Esophagus muscularis mucosa (tissue), 4 donors: ENCODE measurements at regions of chr17 and their contacts with region 1.

Region 1: GRCh38 chr17:30336369-30337171 is 2.7 kb upstream of the TMIGD1 start:
- DNase-seq: peak; percentile 86
- H3K4me3 ChIP-seq: no peak overlapping the region
- H3K27ac ChIP-seq: no peak overlapping the region
- H3K4me1 ChIP-seq: peaks cover 5 to 21% (median 19%) of the 10 kb centered on the region in 4 donors
- H3K27me3 ChIP-seq: no peaks in the 10 kb centered on the region
- CTCF ChIP-seq: peak; percentile 43 to 52 (median 49)
- EP300 ChIP-seq: no peak
- POLR2A ChIP-seq: no peak

Region 2: GRCh38 chr17:30124273-30124796 is 212.2 kb before region 1 on chr17:
- intact Hi-C with region 1: loop called (anchors 10 kb)
- DNase-seq: no peak
- H3K4me3 ChIP-seq: no peak overlapping the region
- H3K27ac ChIP-seq: no peak overlapping the region
- H3K4me1 ChIP-seq: peaks cover 3 to 63% (median 45%) of the 10 kb centered on the region in 4 donors
- H3K27me3 ChIP-seq: no peaks in the 10 kb centered on the region
- CTCF ChIP-seq: no peak
- EP300 ChIP-seq: no peak
- POLR2A ChIP-seq: no peak

Region 3: DNA sequence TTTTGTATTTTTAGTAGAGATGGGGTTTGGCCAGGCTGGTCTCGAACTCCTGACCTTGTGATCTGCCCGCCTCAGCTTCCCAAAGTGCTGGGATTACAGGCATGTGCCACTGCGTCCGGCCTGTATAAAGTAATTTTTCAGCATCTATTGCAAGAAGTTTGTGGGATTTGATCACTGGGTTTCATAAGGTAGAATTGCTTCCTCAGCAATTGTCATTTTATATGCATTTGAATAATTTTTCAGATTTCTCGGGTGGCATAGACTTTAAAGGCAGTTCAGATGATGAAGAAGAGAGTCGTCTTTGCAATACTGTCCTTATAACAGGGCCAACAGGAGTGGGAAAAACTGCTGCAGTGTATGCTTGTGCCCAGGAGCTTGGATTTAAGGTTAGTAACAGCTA is 532.4 kb after region 1 on chr17:
- intact Hi-C with region 1: no loop called
- DNase-seq: no peak
- H3K4me3 ChIP-seq: no peak overlapping the region
- H3K27ac ChIP-seq: no peak overlapping the region
- H3K4me1 ChIP-seq: no peaks in the 10 kb centered on the region
- H3K27me3 ChIP-seq: no peaks in the 10 kb centered on the region
- CTCF ChIP-seq: no peak
- EP300 ChIP-seq: no peak
- POLR2A ChIP-seq: no peak